MCF 10A (cell line): ENCODE measurements at regions of chr4 and their contacts with region 1.

Region 1: GRCh38 chr4:83771113-83771705 is 235.3 kb downstream of the GPAT3 start:
- DNase-seq: peak; percentile 71
- H3K4me3 Mint-ChIP-seq: no peak overlapping the region
- H3K27ac Mint-ChIP-seq: no peak overlapping the region
- H3K4me1 Mint-ChIP-seq: no peaks in the 10 kb centered on the region
- H3K27me3 Mint-ChIP-seq: peaks cover 37% of the 10 kb centered on the region
- CTCF ChIP-seq: peak; percentile 79

Region 2: GRCh38 chr4:83503974-83504373 is 267.2 kb before region 1 on chr4:
- CTCF ChIA-PET with region 1: no interaction called
- POLR2A ChIA-PET with region 1: no interaction called
- intact Hi-C with region 1: loop called (anchors 10 kb)
- DNase-seq: no peak
- H3K4me3 Mint-ChIP-seq: no peak overlapping the region
- H3K27ac Mint-ChIP-seq: no peak overlapping the region
- H3K4me1 Mint-ChIP-seq: no peaks in the 10 kb centered on the region
- H3K27me3 Mint-ChIP-seq: no peaks in the 10 kb centered on the region
- CTCF ChIP-seq: no peak

Region 3: DNA sequence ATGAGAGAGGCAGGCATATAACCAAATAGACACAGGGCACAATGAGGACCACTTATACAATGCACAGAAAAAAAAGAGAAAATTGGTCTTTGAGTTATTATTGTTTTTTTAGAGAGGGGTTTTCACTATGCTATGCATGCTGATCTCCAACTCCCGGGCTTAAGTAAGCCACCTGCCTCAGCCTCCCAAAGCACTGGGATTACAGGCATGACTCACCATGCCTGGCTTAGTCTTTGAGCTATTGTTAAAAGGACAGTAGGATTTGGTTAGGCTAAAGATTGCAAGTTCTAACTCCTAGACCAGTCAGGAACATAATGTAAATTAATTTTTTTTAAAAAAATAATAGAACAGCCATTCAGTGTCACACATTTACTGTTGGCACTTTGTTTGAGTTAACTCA is 104.8 kb after region 1 on chr4:
- CTCF ChIA-PET with region 1: no interaction called
- POLR2A ChIA-PET with region 1: no interaction called
- intact Hi-C with region 1: no loop called
- DNase-seq: peak; percentile 45
- H3K4me3 Mint-ChIP-seq: no peak overlapping the region
- H3K27ac Mint-ChIP-seq: no peak overlapping the region
- H3K4me1 Mint-ChIP-seq: no peaks in the 10 kb centered on the region
- H3K27me3 Mint-ChIP-seq: no peaks in the 10 kb centered on the region
- CTCF ChIP-seq: no peak

Region 4: DNA sequence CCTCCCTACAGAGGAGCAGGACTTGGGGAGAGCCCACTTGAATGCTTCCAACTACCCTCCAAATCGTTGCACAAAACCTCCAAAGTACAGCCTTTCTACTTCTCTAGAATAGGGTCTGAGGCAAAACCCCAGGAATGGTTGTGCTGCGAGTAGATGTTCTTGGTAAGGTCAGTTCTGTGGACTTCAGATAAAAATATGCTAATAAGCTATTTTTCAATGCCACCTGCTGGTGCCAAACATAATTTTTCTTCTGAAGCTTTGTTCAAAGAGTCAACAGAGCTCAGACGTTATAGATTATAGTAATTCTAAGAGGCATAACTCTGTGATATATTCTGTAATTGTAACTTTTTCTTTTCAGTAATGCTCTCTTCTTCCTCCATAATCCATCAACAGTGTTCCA is 190.4 kb after region 1 on chr4:
- CTCF ChIA-PET with region 1: interaction called, 57 read pairs
- POLR2A ChIA-PET with region 1: interaction called, 5 read pairs
- intact Hi-C with region 1: loop called (anchors 1 kb)
- DNase-seq: peak; percentile 39
- H3K4me3 Mint-ChIP-seq: no peak overlapping the region
- H3K27ac Mint-ChIP-seq: no peak overlapping the region
- H3K4me1 Mint-ChIP-seq: no peaks in the 10 kb centered on the region
- H3K27me3 Mint-ChIP-seq: no peaks in the 10 kb centered on the region
- CTCF ChIP-seq: peak; percentile 41

Region 5: DNA sequence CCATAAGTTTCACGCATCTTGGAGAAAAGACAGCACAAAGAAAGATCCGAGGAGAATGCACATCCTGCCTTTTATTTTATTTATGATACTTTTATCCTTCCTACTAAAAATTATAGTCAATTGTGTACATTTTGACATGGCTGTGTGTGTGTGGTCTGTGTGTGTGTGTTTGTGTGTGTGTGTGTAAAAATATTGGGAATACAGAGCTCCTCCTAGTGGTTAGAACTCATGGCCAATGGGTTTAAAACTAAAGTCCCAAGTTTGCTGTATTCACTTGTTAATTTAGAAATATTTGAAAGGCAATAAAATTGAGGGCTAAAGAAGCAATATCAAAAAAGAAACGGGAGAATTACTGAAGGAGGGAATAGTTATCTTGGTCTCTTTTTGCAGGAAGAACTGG is 680.3 kb after region 1 on chr4:
- CTCF ChIA-PET with region 1: interaction called, 13 read pairs
- POLR2A ChIA-PET with region 1: no interaction called
- intact Hi-C with region 1: no loop called
- DNase-seq: peak; percentile 26
- H3K4me3 Mint-ChIP-seq: no peak overlapping the region
- H3K27ac Mint-ChIP-seq: no peak overlapping the region
- H3K4me1 Mint-ChIP-seq: no peaks in the 10 kb centered on the region
- H3K27me3 Mint-ChIP-seq: peaks cover 23% of the 10 kb centered on the region
- CTCF ChIP-seq: peak; percentile 58

Region 6: GRCh38 chr4:84529169-84529751 is 758.1 kb after region 1 on chr4:
- CTCF ChIA-PET with region 1: interaction called, 24 read pairs
- POLR2A ChIA-PET with region 1: no interaction called
- intact Hi-C with region 1: no loop called
- DNase-seq: peak; percentile 51
- H3K4me3 Mint-ChIP-seq: no peak overlapping the region
- H3K27ac Mint-ChIP-seq: no peak overlapping the region
- H3K4me1 Mint-ChIP-seq: peaks cover 16% of the 10 kb centered on the region
- H3K27me3 Mint-ChIP-seq: peaks cover 17% of the 10 kb centered on the region
- CTCF ChIP-seq: peak; percentile 53